ENCODE measurements at regions of chr10 and their contacts with region 1.

Region 1: GRCh38 chr10:100009793-100010676 is at the start of gene DNMBP:
- DNase-seq: peak; percentile 82 to 91
- ATAC-seq: peak; percentile 72 to 89
- H3K4me3 ChIP-seq: peak within 1 kb of the TSS; percentile 81
- H3K27ac ChIP-seq: peak within 1 kb of the TSS; percentile 83 to 92
- H3K4me1 ChIP-seq: peaks cover 31% of the 10 kb centered on the region
- CTCF ChIP-seq: peak; percentile 90
- EP300 ChIP-seq: no peak
- POLR2A ChIP-seq: peak; percentile 37
- RAD21 ChIP-seq: peak; percentile 34 to 60; a peak in 4 of 5 replicates
- polyA plus RNA-seq, gene DNMBP: 20.3 and 24.3 TPM in 2 replicates

Region 2: DNA sequence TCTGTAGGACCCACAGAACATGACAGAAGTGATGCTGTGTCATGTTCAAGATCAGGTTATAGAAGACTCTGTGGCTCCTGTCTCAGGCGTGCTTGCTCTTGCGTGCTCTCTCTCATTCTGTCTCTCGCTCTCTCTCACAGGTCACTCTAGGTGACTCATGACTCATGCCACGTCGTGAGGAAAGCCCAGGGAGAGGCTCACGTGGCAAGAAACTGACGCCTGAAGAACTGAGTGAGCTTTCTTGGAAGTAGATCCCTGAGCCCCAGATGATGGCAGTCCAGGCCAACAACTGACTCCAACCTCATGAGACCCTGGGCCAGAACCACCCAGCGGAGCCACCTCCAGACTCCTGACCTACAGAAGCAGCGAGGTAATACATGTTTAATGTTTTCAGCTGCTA is 103.6 kb before region 1 on chr10:
- CTCF ChIA-PET with region 1: interaction called, 65 read pairs
- POLR2A ChIA-PET with region 1: no interaction called
- DNase-seq: peak; percentile 79 to 88
- ATAC-seq: peak; percentile 89 to 97
- H3K4me3 ChIP-seq: no peak overlapping the region
- H3K27ac ChIP-seq: peak overlapping the region; percentile 46 to 59
- H3K4me1 ChIP-seq: peaks cover 21% of the 10 kb centered on the region
- CTCF ChIP-seq: peak; percentile 50
- EP300 ChIP-seq: no peak
- POLR2A ChIP-seq: no peak
- RAD21 ChIP-seq: peak; percentile 69 to 87

Region 3: GRCh38 chr10:99958302-99958701 is 51.7 kb before region 1 on chr10:
- CTCF ChIA-PET with region 1: interaction called, 11 read pairs
- POLR2A ChIA-PET with region 1: no interaction called
- DNase-seq: no peak
- ATAC-seq: no peak
- H3K4me3 ChIP-seq: no peak overlapping the region
- H3K27ac ChIP-seq: no peak overlapping the region
- H3K4me1 ChIP-seq: peaks cover 10% of the 10 kb centered on the region; the same call in 2 of the 3 replicates
- CTCF ChIP-seq: no peak
- EP300 ChIP-seq: no peak
- POLR2A ChIP-seq: no peak
- RAD21 ChIP-seq: no peak

Region 4: GRCh38 chr10:99983280-99983988 is 26.6 kb before region 1 on chr10:
- CTCF ChIA-PET with region 1: interaction called, 58 read pairs
- POLR2A ChIA-PET with region 1: interaction called, 3 read pairs
- DNase-seq: no peak
- ATAC-seq: peak in 1 of 2 experiments; percentile 54; a peak in 4 of 6 replicates
- H3K4me3 ChIP-seq: no peak overlapping the region
- H3K27ac ChIP-seq: peak overlapping the region in 1 of 2 experiments; percentile 74; a peak in 3 of 6 replicates
- H3K4me1 ChIP-seq: peaks cover 44% of the 10 kb centered on the region
- CTCF ChIP-seq: no peak
- EP300 ChIP-seq: no peak
- POLR2A ChIP-seq: no peak
- RAD21 ChIP-seq: no peak

Region 5: GRCh38 chr10:100020142-100020885 is 10.3 kb after region 1 on chr10:
- CTCF ChIA-PET with region 1: interaction called, 86 read pairs
- POLR2A ChIA-PET with region 1: no interaction called
- DNase-seq: peak; percentile 46 to 86
- ATAC-seq: peak; percentile 78 to 82
- H3K4me3 ChIP-seq: 0 out of 3 replicates have a peak overlapping the region, but pooled peaks have one; percentile 14
- H3K27ac ChIP-seq: peak overlapping the region; percentile 80 to 93
- H3K4me1 ChIP-seq: peaks cover 53% of the 10 kb centered on the region
- CTCF ChIP-seq: no peak
- EP300 ChIP-seq: peak; percentile 22 to 42; a peak in 2 of 5 replicates
- POLR2A ChIP-seq: no peak
- RAD21 ChIP-seq: peak in 1 of 2 experiments; percentile 16; a peak in 1 of 5 replicates

Region 6: DNA sequence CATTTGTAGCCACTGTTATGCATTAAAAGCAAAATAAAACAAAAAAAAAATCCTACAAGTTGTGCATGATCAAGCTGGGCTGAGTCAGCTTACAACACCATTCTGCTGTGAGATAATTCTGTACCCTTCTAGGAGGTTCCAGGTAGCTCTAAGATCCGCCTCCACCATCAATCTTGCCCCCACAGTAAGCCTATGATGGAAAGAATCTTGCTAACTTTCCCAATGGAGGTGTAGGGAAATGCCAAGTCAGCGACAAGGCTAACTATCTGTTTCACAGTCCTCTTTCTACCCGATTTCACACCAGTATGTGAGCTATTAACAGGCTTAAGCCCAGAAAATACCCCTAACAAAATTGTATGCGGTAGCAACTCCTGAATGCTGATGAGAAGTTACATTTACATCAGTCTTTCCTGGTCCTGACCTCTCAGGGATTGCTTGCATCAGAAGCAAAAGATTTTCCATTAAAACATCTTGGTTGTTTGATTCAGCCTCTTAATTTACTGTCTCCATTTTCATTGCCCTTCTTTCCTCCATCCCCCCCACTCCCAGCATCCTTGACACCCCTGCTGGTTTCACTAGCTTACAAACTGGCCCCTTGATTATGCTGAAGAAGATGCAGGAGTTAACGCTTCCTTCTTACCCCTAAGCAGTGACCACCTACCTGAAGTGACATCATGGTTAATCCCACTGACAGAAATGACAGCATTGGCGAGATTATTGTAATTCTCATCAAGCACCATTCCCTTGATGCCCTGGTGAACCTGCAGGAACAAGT is 43.8 kb after region 1 on chr10:
- CTCF ChIA-PET with region 1: interaction called, 101 read pairs
- POLR2A ChIA-PET with region 1: no interaction called
- DNase-seq: no peak
- ATAC-seq: no peak
- H3K4me3 ChIP-seq: no peak overlapping the region
- H3K27ac ChIP-seq: no peak overlapping the region
- H3K4me1 ChIP-seq: no peaks in the 10 kb centered on the region
- CTCF ChIP-seq: no peak
- EP300 ChIP-seq: no peak
- POLR2A ChIP-seq: no peak
- RAD21 ChIP-seq: no peak